Ovary (tissue), 10 donors: ENCODE measurements at regions of chr22 and their contacts with region 1.

Region 1: DNA sequence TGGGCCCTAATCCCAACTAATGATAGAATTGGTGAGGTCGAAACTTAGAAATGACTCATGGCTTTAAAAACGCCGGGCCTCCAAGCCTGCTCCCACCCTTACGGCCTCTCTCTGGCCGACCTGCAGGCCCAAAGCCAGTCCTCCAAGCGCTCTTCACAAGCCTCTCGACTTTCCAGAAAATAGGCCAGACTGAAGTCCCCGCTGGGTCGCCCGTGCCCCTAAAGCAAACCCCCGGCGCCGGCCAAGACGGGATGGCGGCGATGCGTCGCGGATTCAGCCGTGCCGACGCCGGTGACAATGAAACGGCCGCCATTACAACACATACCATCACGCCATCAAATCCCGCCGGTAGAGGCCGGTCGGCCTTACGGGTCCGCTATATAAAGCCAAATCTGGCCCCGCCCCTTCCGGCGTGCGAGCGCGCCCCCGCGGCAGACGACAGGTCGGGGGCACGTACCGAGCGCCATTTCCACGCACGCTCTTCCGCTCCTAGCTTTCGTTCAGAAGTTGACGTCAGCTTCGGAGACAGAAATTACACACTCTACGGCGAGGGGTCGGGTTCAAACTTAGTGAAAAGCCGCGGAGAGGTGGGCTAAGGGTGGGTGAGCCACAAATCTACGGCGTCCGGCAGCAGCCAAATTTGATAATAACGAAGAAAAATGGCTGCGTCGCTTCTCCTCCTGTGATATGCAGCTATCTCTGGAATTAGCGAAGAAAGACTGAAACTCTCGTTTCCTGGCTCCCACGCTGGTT is at the start of gene RPL3:
- DNase-seq: peak; percentile 95 to 99 (median 98)
- H3K4me3 ChIP-seq: peak within 1 kb of the TSS; percentile 83
- H3K27ac ChIP-seq: peak within 1 kb of the TSS; percentile 88 to 93
- H3K4me1 ChIP-seq: peaks cover 11% of the 10 kb centered on the region
- H3K27me3 ChIP-seq: no peaks in the 10 kb centered on the region
- CTCF ChIP-seq: peak in 2 of 3 donors; percentile 33 to 51
- EP300 ChIP-seq: peak; percentile 74
- POLR2A ChIP-seq: peak; percentile 92
- total RNA-seq, gene RPL3: 3,686 to 6,016 (median 4,727) TPM

Region 2: GRCh38 chr22:38872172-38872830 is 447.1 kb before region 1 on chr22 and contains the start of gene CBX6:
- intact Hi-C with region 1: loop called in 1 of 4 experiments (anchors 5 kb)
- DNase-seq: peak; percentile 96 to 99 (median 98)
- H3K4me3 ChIP-seq: peak within 1 kb of the TSS; percentile 64
- H3K27ac ChIP-seq: peak within 1 kb of the TSS; percentile 95
- H3K4me1 ChIP-seq: peaks cover 3% of the 10 kb centered on the region
- H3K27me3 ChIP-seq: no peaks in the 10 kb centered on the region
- CTCF ChIP-seq: peak in 1 of 3 donors; percentile 10
- EP300 ChIP-seq: no peak
- POLR2A ChIP-seq: peak; percentile 43
- total RNA-seq, gene CBX6: 32.7 to 175 (median 120) TPM

Region 3: DNA sequence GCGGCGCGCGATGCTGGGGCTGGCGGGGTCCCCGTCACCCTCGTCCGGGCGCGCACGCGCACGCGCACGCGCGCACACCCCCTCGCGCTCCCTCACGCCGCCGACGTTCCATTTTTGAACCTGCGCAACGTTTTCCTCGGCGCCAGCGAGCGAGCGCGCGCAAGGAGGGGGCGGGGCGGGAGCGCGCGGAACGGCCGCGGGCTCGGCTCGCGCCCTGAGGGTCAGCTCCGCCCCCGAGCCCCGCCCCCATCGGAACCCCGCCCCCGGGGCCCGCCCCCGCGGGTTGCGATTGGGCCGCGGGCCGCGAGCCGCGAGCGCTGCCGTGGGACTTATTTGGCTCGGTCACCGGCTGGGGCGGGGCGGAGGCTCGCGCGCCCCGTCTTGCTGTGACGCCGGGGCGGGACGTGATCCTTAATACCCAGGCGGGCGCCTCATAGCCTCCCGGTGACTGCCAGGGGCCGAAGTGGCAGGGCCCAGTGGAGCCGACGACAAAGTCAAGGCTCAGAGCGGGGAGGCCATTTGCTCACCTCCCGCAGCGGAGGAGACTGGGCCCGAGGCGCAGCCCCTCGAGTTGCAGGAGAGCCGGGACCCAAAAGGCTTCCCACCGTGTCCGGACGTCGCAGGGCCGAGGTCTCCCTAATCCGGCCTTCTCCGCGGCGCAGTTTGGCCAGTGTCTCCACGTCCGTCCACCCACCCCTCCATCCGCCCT is 166.8 kb before region 1 on chr22 and contains the start of gene CBX7:
- intact Hi-C with region 1: loop called in 1 of 4 experiments (anchors 5 kb)
- DNase-seq: peak; percentile 94 to 97 (median 96)
- H3K4me3 ChIP-seq: peak within 1 kb of the TSS; percentile 97
- H3K27ac ChIP-seq: peak within 1 kb of the TSS; percentile 94 to 97
- H3K4me1 ChIP-seq: peaks cover 15% of the 10 kb centered on the region
- H3K27me3 ChIP-seq: no peaks in the 10 kb centered on the region
- CTCF ChIP-seq: no peak
- EP300 ChIP-seq: peak; percentile 12
- POLR2A ChIP-seq: peak; percentile 91
- total RNA-seq, gene CBX7: 47.2 to 107 (median 84.9) TPM

Region 4: DNA sequence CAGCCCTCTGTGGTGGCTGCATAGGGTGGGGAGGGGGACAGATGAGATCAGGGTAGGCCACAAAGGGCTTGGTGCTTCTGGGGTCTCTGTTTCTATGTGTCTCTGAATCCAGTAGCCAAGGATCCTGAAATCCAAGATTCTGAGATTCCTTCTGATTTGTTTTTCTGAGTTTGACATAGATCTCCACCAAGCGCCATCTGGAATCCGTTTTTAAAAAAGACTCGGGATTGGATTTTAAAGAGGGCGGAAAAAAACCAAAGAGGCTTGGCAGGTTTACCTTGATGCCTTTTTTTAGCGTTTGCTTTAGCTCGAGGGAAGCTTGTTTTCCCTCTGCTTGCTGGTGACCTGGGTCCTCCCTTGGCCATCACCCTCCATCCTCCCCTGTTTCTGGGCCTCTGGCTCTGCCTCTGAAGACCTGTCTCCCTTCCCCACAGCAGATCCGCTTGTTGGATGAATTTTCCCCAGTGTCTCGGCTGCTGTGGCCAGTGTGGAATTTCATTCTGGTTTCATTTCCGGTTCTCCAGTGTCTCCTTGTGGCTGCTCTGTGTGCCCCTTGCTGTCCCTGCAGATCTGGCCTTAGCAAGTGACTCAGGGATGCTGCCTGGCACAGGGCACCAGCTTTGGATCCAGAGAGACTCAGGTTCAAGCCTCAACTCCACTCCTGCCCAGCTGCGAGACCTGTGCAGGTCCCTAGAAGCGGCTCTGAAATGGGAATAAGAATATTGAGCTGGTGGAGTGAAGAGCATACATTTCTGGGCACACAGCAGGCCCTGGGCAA is 45.5 kb after region 1 on chr22:
- intact Hi-C with region 1: no loop called
- DNase-seq: no peak
- H3K4me3 ChIP-seq: no peak overlapping the region
- H3K27ac ChIP-seq: no peak overlapping the region
- H3K4me1 ChIP-seq: peaks cover 14% of the 10 kb centered on the region
- H3K27me3 ChIP-seq: no peaks in the 10 kb centered on the region
- CTCF ChIP-seq: no peak
- EP300 ChIP-seq: no peak
- POLR2A ChIP-seq: no peak

Region 5: DNA sequence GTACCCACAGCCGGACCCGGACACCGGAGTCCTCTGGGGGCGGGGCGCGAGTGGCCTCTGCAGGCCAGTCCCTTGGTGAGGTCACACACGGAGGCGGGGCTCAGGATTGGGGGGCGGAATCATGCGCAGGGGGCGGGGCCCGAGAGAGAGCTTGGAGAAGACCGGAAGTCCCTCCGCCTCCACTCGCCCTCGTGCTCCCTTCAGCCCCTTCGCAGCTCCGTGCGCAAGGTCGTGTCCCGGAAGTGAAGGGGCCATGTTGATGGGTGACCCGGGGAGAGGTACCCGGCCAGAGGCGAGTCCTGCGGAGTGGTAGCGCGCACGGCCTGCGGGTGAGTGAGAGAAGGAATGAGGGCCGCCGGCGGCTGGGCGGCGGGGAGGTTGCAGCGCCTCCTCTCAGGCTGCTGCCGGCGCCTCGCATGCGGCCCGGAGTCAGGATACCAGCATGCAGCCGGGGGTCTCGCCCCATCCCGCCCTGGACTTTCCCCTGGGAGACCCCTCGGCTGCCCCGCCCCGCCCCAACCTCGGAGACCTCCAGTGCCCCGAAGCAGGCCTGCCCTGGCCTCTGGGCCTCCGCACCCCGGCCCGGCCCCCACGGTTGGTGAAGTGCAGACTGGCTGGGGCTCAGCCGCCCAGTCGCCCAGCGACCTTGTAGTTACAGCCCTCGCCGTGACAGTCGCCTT is 182.8 kb after region 1 on chr22 and contains the start of gene MIEF1:
- intact Hi-C with region 1: loop called in 1 of 4 experiments (anchors 5 kb)
- DNase-seq: peak; percentile 96 to 98 (median 98)
- H3K4me3 ChIP-seq: peak within 1 kb of the TSS; percentile 95
- H3K27ac ChIP-seq: peak within 1 kb of the TSS; percentile 69 to 91
- H3K4me1 ChIP-seq: peaks cover 15% of the 10 kb centered on the region
- H3K27me3 ChIP-seq: no peaks in the 10 kb centered on the region
- CTCF ChIP-seq: no peak
- EP300 ChIP-seq: no peak
- POLR2A ChIP-seq: peak; percentile 50
- total RNA-seq, gene MIEF1: 13.1 to 23.9 (median 19.9) TPM

Region 6: DNA sequence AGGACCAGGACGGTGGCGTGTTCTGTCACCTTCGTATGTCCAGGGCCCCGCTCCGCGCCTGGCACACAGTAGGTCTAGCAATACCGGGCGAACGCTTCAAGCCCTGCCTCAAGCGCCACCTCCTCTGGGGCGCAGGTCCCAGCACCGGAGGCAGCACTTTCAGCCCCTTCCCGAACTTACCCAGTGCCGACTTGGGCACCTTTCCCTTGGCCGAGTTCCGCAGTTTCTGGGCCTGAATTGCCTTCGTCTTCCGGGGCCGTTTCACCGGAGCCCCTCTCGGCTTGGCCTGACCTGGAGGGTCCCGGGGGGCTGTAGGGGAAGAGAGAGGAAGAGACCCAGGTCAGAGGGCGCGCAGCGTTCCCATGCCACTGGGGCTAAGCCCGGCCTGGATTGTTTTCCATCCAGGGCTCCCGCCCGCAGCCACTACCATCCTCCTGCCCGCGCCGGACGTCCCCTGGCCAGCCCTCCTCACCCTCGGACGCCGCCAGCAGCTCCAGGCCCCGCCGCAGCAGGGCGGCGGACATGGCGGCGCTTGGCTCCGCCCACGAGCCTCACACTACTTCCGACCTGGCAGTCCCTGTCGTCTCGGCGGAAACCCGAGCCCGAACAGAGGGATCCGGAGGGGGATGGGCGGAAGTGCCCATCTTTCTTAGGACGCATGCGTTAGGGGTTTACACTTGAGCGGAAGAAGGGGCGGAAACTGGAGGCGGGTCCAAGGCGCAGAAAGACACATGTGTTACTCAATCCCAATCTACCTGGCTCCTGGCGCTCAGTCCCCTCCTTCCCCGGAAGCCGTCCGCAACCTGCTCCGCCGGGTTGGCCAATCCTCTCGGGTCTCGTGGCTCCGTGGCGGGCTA is 213.0 kb after region 1 on chr22 and contains the start of gene RPS19BP1:
- intact Hi-C with region 1: loop called in 3 of 4 experiments (anchors 5 to 10 kb)
- DNase-seq: peak; percentile 99 to 100 (median 100)
- H3K4me3 ChIP-seq: peak within 1 kb of the TSS; percentile 68
- H3K27ac ChIP-seq: peak within 1 kb of the TSS; percentile 38 to 75
- H3K4me1 ChIP-seq: peaks cover 14% of the 10 kb centered on the region
- H3K27me3 ChIP-seq: no peaks in the 10 kb centered on the region
- CTCF ChIP-seq: no peak
- EP300 ChIP-seq: no peak
- POLR2A ChIP-seq: peak; percentile 68
- total RNA-seq, gene RPS19BP1: 41.9 to 117 (median 44.2) TPM